ENCODE measurements at regions of chr1 and their contacts with region 1.

Region 1: DNA sequence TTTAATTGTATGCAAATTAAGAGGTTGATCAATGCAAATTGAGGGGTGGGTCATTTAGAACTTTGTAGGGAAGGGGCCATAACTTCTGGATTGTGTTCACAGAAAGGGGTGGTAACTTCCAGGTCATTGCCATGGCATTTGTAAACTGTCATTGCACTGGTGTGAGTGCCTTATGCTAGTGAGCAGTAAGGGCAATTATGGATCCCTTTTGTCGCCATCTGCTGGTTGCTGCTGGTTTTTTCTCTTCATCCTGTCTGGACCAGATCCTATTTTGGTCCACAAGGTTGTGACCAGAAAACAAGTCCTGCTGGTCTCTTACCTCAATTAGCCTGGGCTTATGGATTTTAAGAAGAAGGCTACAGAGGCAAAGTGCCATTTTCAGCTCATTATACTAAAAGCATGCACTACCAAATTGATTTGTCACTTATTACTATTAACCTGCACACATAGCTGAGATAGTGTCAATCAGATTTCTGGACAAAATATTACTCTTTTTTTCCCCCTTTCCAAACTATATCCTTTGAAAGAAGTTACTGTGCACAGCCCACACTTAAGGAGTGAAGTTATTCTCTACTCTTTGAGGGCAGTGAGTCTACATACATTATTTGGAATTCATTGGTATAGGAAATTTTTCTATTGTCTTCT is 196.2 kb downstream of the ZC3H11B start:
- DNase-seq: peak; percentile 45
- ATAC-seq: peak; percentile 95
- H3K4me3 ChIP-seq: no peak overlapping the region
- H3K27ac ChIP-seq: no peak overlapping the region
- H3K4me1 ChIP-seq: no peaks in the 10 kb centered on the region
- H3K27me3 ChIP-seq: no peaks in the 10 kb centered on the region
- CTCF ChIP-seq: peak; percentile 34 to 80 (median 79); a peak in 4 of 6 replicates
- POLR2A ChIP-seq: no peak
- RAD21 ChIP-seq: peak; percentile 56

Region 2: DNA sequence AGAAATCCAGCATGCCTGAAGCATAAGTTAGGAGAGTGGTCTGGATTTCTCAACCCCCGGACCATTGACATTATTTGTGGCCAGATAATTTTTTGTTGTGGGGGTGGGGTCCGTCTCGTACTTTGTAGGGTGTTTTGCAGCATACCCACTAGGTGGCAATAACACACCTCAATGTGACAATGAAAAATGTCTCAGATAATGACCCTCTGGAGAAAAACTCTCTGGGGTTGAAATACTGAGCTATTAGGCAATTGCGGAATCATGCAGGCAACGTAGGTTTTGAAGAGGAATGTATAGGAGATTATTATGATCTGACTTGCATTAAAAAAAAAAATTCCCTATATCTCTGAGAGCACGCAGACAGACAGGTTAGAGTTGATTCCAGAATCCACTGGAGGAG is 1156.9 kb before region 1 on chr1:
- CTCF ChIA-PET with region 1: no interaction called
- POLR2A ChIA-PET with region 1: no interaction called
- RAD21 ChIA-PET with region 1: no interaction called
- intact Hi-C with region 1: loop called (anchors 5 kb)
- DNase-seq: peak; percentile 7
- ATAC-seq: peak; percentile 82
- H3K4me3 ChIP-seq: no peak overlapping the region
- H3K27ac ChIP-seq: no peak overlapping the region
- H3K4me1 ChIP-seq: no peaks in the 10 kb centered on the region
- H3K27me3 ChIP-seq: no peaks in the 10 kb centered on the region
- CTCF ChIP-seq: peak; percentile 26 to 67 (median 67); a peak in 5 of 6 replicates
- POLR2A ChIP-seq: no peak
- RAD21 ChIP-seq: peak; percentile 57

Region 3: DNA sequence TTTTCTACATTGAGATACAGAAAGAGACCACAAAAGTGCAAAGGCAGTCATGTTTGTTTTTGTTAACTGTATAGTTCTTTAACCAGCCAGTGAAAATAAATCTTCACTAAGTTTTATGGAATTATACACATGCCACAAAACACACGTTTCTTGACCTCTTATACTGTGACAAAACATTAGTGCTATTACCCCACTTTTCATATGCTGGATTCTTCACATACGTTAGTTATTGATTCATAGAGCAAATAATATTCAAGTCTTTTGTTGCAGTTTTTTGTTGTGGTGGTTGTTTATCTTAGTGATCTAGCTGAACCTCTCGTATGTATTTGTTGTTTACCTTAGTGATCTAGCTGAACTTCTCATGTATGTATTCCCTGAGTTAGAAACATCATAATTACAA is 215.1 kb before region 1 on chr1:
- CTCF ChIA-PET with region 1: no interaction called
- POLR2A ChIA-PET with region 1: no interaction called
- RAD21 ChIA-PET with region 1: no interaction called
- intact Hi-C with region 1: loop called (anchors 5 kb)
- DNase-seq: no peak
- ATAC-seq: no peak
- H3K4me3 ChIP-seq: no peak overlapping the region
- H3K27ac ChIP-seq: no peak overlapping the region
- H3K4me1 ChIP-seq: no peaks in the 10 kb centered on the region
- H3K27me3 ChIP-seq: no peaks in the 10 kb centered on the region
- CTCF ChIP-seq: no peak
- POLR2A ChIP-seq: no peak
- RAD21 ChIP-seq: no peak

Region 4: GRCh38 chr1:219227360-219228057 is 189.2 kb before region 1 on chr1:
- CTCF ChIA-PET with region 1: no interaction called
- POLR2A ChIA-PET with region 1: no interaction called
- RAD21 ChIA-PET with region 1: no interaction called
- intact Hi-C with region 1: no loop called
- DNase-seq: no peak
- ATAC-seq: no peak
- H3K4me3 ChIP-seq: no peak overlapping the region
- H3K27ac ChIP-seq: no peak overlapping the region
- H3K4me1 ChIP-seq: no peaks in the 10 kb centered on the region
- H3K27me3 ChIP-seq: no peaks in the 10 kb centered on the region
- CTCF ChIP-seq: no peak
- POLR2A ChIP-seq: no peak
- RAD21 ChIP-seq: no peak